Posterior vena cava (tissue), 2 donors: ENCODE measurements at regions of chr9 and their contacts with region 1.

Region 1: DNA sequence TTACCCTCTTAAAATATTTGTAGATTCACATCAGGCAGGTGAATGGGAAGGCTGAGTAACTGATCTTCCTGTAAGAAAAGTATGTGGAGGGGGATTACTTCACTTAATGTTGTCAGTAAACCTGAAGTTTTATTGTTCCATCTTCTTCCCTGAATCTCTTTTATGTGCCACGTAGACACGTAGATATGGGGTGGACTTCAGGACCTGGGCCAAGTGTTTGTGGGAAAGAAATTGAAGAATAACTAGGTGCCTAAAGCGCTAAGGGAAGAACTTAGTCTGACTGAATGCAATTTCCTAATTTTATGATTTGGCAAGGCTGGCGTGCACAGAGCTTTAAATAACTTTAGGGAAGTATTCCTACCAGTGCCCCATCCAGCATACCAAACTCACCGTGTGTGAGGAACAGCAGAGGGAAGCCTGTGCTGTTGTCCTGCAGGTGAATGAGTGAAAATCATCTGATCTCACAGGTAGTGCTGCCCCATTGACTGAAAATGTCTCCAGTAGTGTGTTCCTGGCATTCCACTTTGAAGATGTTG is 323.4 kb downstream of the KDM4C start:
- DNase-seq: no peak

Region 2: GRCh38 chr9:7067169-7067568 is 14.0 kb before region 1 on chr9:
- intact Hi-C with region 1: loop called in 1 of 2 experiments (anchors 1 kb)
- DNase-seq: no peak

Region 3: GRCh38 chr9:7570107-7570720 is 489.1 kb after region 1 on chr9:
- intact Hi-C with region 1: no loop called
- DNase-seq: no peak